ENCODE measurements at regions of chr19 and their contacts with region 1.

Region 1: GRCh38 chr19:57191141-57192076 is at the start of gene ZNF264:
- DNase-seq: peak; percentile 76 to 93 (median 90)
- ATAC-seq: peak; percentile 92
- H3K4me3 ChIP-seq: peak within 1 kb of the TSS; percentile 84
- H3K4me3 Mint-ChIP-seq: peak within 1 kb of the TSS; percentile 94
- H3K27ac ChIP-seq: peak within 1 kb of the TSS; percentile 85 to 90
- H3K27ac Mint-ChIP-seq: peak within 1 kb of the TSS; percentile 96
- H3K4me1 ChIP-seq: peaks cover 22% of the 10 kb centered on the region
- H3K4me1 Mint-ChIP-seq: peaks cover 40% of the 10 kb centered on the region
- H3K27me3 ChIP-seq: peaks cover 0 to 2% of the 10 kb centered on the region in 2 experiments
- H3K27me3 Mint-ChIP-seq: peaks cover 7% of the 10 kb centered on the region
- CTCF ChIP-seq: no peak
- total RNA-seq, gene ZNF264: 54.7 to 57.0 TPM

Region 2: DNA sequence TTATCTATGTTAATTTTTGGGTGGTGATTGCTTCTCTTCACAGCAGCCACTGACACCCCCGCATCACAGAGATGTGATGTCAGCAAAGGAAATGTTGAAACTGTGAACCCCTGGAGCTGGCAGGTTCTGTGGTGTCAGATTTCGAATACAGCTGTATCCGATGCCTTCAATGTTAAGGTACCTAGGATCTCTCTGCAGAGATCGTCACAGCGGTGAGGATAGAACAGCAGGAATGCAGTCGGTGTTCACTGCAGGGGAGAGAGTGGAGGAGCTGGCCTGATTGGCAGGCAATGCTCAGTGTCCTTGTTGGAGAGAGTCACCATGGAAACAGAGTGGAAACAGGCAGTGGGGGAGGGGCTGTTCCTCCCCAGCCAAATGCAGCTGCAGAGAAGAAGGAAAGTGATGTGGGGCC is 440.3 kb before region 1 on chr19:
- CTCF ChIA-PET with region 1: no interaction called
- POLR2A ChIA-PET with region 1: no interaction called
- intact Hi-C with region 1: no loop called
- DNase-seq: no peak
- ATAC-seq: no peak
- H3K4me3 ChIP-seq: no peak overlapping the region
- H3K4me3 Mint-ChIP-seq: no peak overlapping the region
- H3K27ac ChIP-seq: no peak overlapping the region
- H3K27ac Mint-ChIP-seq: no peak overlapping the region
- H3K4me1 ChIP-seq: no peaks in the 10 kb centered on the region
- H3K4me1 Mint-ChIP-seq: no peaks in the 10 kb centered on the region
- H3K27me3 ChIP-seq: no peaks in the 10 kb centered on the region
- H3K27me3 Mint-ChIP-seq: peaks cover 5% of the 10 kb centered on the region
- CTCF ChIP-seq: no peak

Region 3: DNA sequence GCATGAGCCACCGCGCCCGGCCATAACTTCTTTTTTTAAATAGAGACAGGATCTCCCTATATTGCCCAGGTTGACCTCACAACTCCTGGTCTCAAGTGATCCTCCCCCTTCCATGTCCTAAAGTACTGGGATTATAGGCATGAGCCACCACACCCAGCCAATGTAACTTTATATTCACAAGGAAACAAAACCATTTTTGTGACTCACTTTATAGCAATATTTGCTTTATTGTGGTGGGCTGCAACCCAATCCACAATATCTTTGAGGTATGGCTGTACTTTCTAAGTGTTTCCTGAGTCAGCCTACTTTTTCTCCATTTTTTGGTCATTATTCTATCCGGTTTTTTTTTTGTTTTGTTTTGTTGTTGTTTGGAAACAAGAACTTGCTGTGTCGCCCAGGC is 38.5 kb before region 1 on chr19:
- CTCF ChIA-PET with region 1: no interaction called
- POLR2A ChIA-PET with region 1: no interaction called
- intact Hi-C with region 1: loop called in 1 of 2 experiments (anchors 1 kb)
- DNase-seq: no peak
- ATAC-seq: no peak
- H3K4me3 ChIP-seq: no peak overlapping the region
- H3K4me3 Mint-ChIP-seq: no peak overlapping the region
- H3K27ac ChIP-seq: no peak overlapping the region
- H3K27ac Mint-ChIP-seq: no peak overlapping the region
- H3K4me1 ChIP-seq: no peaks in the 10 kb centered on the region
- H3K4me1 Mint-ChIP-seq: no peaks in the 10 kb centered on the region
- H3K27me3 ChIP-seq: no peaks in the 10 kb centered on the region
- H3K27me3 Mint-ChIP-seq: peaks cover 8% of the 10 kb centered on the region
- CTCF ChIP-seq: no peak

Region 4: DNA sequence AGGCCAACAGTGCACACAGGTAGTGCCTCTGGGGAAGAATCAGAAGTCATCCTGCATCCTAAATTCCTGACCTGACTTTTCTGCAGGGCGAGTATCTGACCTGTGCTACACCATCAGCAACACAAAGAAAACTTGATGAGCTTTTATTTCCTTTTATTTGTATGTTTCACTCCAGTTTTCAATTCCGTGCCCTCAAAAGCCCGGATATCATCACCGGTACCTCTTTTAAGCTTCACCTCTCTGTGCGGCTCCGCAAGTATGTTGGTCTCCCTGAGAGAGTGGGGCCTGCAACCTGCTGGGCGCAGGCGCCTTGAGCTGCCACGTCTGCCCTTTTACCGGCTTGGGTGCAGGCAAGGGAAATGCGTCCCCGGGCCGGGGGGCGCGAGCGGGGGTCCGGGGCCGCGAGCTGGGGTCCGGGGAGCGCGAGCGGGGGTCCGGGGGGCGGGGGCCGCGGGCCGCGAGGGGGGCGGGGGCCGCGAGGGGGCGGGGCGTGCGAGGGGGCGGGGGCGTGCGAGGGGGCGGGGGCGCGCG is 19.8 kb before region 1 on chr19:
- CTCF ChIA-PET with region 1: no interaction called
- POLR2A ChIA-PET with region 1: interaction called, 9 read pairs
- intact Hi-C with region 1: loop called (anchors 1 kb)
- DNase-seq: peak in 5 of 9 experiments; percentile 44 to 78 (median 53)
- ATAC-seq: peak; percentile 82
- H3K4me3 ChIP-seq: peak overlapping the region; percentile 33 to 41
- H3K4me3 Mint-ChIP-seq: peak overlapping the region; percentile 82
- H3K27ac ChIP-seq: peak overlapping the region in 1 of 2 experiments; percentile 42
- H3K27ac Mint-ChIP-seq: peak overlapping the region; percentile 81
- H3K4me1 ChIP-seq: peaks cover 4% of the 10 kb centered on the region
- H3K4me1 Mint-ChIP-seq: peaks cover 16% of the 10 kb centered on the region
- H3K27me3 ChIP-seq: no peaks in the 10 kb centered on the region
- H3K27me3 Mint-ChIP-seq: no peaks in the 10 kb centered on the region
- CTCF ChIP-seq: no peak

Region 5: DNA sequence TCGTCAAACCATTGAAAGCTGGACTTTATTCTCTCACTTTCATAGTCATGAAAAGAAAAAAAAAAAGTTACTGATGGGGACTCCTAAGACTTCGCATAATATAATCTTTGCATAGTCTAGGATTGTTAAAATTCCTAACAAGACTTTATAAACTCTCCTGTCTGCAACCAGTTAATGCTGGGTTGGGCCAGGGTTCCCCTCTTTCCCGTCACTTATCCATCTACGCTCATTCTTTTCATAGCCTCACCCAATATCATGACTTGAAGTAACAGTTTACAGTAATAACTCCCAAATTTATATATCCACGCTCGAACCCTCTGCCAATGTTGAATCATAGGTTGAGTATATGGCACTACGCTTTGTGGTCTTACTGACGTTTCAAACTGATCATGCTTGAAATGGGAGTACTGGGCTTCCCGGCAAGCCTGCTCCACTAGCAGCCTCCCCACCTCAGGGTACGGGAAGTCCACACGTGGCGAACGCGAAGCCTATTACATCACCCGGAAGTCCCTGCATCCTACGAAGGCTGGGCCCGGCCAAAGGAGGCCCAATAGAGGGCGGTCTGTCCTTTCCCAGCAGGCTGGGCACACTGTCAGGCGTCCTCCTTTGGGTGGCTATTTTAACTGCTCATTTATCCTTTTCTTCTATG is 88.1 kb after region 1 on chr19:
- CTCF ChIA-PET with region 1: interaction called, 3 read pairs
- POLR2A ChIA-PET with region 1: no interaction called
- intact Hi-C with region 1: loop called (anchors 1 kb)
- DNase-seq: peak; percentile 55 to 94 (median 75)
- ATAC-seq: peak; percentile 64
- H3K4me3 ChIP-seq: peak overlapping the region; percentile 54 to 99
- H3K4me3 Mint-ChIP-seq: no peak overlapping the region
- H3K27ac ChIP-seq: peak overlapping the region; percentile 86 to 93
- H3K27ac Mint-ChIP-seq: no peak overlapping the region
- H3K4me1 ChIP-seq: peaks cover 28% of the 10 kb centered on the region
- H3K4me1 Mint-ChIP-seq: peaks cover 33% of the 10 kb centered on the region
- H3K27me3 ChIP-seq: no peaks in the 10 kb centered on the region
- H3K27me3 Mint-ChIP-seq: no peaks in the 10 kb centered on the region
- CTCF ChIP-seq: no peak

Region 6: GRCh38 chr19:57320180-57321084 is 129.0 kb after region 1 on chr19 and contains the start of gene ZNF543:
- CTCF ChIA-PET with region 1: no interaction called
- POLR2A ChIA-PET with region 1: no interaction called
- intact Hi-C with region 1: loop called in 1 of 2 experiments (anchors 1 kb)
- DNase-seq: peak; percentile 85 to 96 (median 91)
- ATAC-seq: peak; percentile 95
- H3K4me3 ChIP-seq: peak within 1 kb of the TSS; percentile 61 to 94
- H3K4me3 Mint-ChIP-seq: peak within 1 kb of the TSS; percentile 92
- H3K27ac ChIP-seq: peak within 1 kb of the TSS; percentile 78 to 94
- H3K27ac Mint-ChIP-seq: peak within 1 kb of the TSS; percentile 96
- H3K4me1 ChIP-seq: peaks cover 21% of the 10 kb centered on the region
- H3K4me1 Mint-ChIP-seq: peaks cover 32% of the 10 kb centered on the region
- H3K27me3 ChIP-seq: peaks cover 6 to 7% of the 10 kb centered on the region in 2 experiments
- H3K27me3 Mint-ChIP-seq: peaks cover 22% of the 10 kb centered on the region
- CTCF ChIP-seq: no peak
- total RNA-seq, gene ZNF543: 4.3 to 4.9 TPM

Region 7: GRCh38 chr19:57350877-57351805 is 159.7 kb after region 1 on chr19 and contains the start of gene ZNF304:
- CTCF ChIA-PET with region 1: no interaction called
- POLR2A ChIA-PET with region 1: no interaction called
- intact Hi-C with region 1: loop called in 1 of 2 experiments (anchors 5 kb)
- DNase-seq: peak; percentile 58 to 93 (median 81)
- ATAC-seq: peak; percentile 99
- H3K4me3 ChIP-seq: peak within 1 kb of the TSS; percentile 79 to 87
- H3K4me3 Mint-ChIP-seq: peak within 1 kb of the TSS; percentile 96
- H3K27ac ChIP-seq: peak within 1 kb of the TSS; percentile 68 to 73
- H3K27ac Mint-ChIP-seq: peak within 1 kb of the TSS; percentile 93
- H3K4me1 ChIP-seq: peaks cover 13% of the 10 kb centered on the region
- H3K4me1 Mint-ChIP-seq: peaks cover 32% of the 10 kb centered on the region
- H3K27me3 ChIP-seq: peaks cover 0 to 4% of the 10 kb centered on the region in 2 experiments
- H3K27me3 Mint-ChIP-seq: no peaks in the 10 kb centered on the region
- CTCF ChIP-seq: no peak
- total RNA-seq, gene ZNF304: 8.6 TPM

Region 8: GRCh38 chr19:57719901-57720519 is 528.6 kb after region 1 on chr19:
- CTCF ChIA-PET with region 1: no interaction called
- POLR2A ChIA-PET with region 1: no interaction called
- intact Hi-C with region 1: loop called in 1 of 2 experiments (anchors 5 kb)
- DNase-seq: peak in 1 of 9 experiments; percentile 23
- ATAC-seq: no peak
- H3K4me3 ChIP-seq: peak overlapping the region in 1 of 2 experiments; percentile 8
- H3K4me3 Mint-ChIP-seq: no peak overlapping the region
- H3K27ac ChIP-seq: no peak overlapping the region
- H3K27ac Mint-ChIP-seq: no peak overlapping the region
- H3K4me1 ChIP-seq: no peaks in the 10 kb centered on the region
- H3K4me1 Mint-ChIP-seq: peaks cover 14% of the 10 kb centered on the region
- H3K27me3 ChIP-seq: no peaks in the 10 kb centered on the region
- H3K27me3 Mint-ChIP-seq: no peaks in the 10 kb centered on the region
- CTCF ChIP-seq: no peak